Dendritic cell treated with granulocyte-macrophage colony-stimulating factor and Interleukin-4, amounts not matched to agents 40 ng/mL and 50 ng/mL, for 4 days (primary cell): ENCODE measurements at regions of chr15 and their contacts with region 1.

Region 1: GRCh38 chr15:75723847-75724660 is 11.4 kb upstream of the CSPG4 start:
- H3K4me3 Mint-ChIP-seq: no peak overlapping the region
- H3K27ac Mint-ChIP-seq: peak overlapping the region; percentile 70
- H3K4me1 Mint-ChIP-seq: peaks cover 17% of the 10 kb centered on the region
- H3K27me3 Mint-ChIP-seq: peaks cover 35% of the 10 kb centered on the region

Region 2: GRCh38 chr15:75684642-75685041 is 39.4 kb before region 1 on chr15:
- intact Hi-C with region 1: loop called (anchors 5 kb)
- H3K4me3 Mint-ChIP-seq: no peak overlapping the region
- H3K27ac Mint-ChIP-seq: no peak overlapping the region
- H3K4me1 Mint-ChIP-seq: no peaks in the 10 kb centered on the region
- H3K27me3 Mint-ChIP-seq: peaks cover 17% of the 10 kb centered on the region

Region 3: GRCh38 chr15:75770131-75770530 is 46.1 kb after region 1 on chr15:
- intact Hi-C with region 1: no loop called
- H3K4me3 Mint-ChIP-seq: no peak overlapping the region
- H3K27ac Mint-ChIP-seq: no peak overlapping the region
- H3K4me1 Mint-ChIP-seq: no peaks in the 10 kb centered on the region
- H3K27me3 Mint-ChIP-seq: no peaks in the 10 kb centered on the region